ENCODE measurements at regions of chr11 and their contacts with region 1.

Region 1: DNA sequence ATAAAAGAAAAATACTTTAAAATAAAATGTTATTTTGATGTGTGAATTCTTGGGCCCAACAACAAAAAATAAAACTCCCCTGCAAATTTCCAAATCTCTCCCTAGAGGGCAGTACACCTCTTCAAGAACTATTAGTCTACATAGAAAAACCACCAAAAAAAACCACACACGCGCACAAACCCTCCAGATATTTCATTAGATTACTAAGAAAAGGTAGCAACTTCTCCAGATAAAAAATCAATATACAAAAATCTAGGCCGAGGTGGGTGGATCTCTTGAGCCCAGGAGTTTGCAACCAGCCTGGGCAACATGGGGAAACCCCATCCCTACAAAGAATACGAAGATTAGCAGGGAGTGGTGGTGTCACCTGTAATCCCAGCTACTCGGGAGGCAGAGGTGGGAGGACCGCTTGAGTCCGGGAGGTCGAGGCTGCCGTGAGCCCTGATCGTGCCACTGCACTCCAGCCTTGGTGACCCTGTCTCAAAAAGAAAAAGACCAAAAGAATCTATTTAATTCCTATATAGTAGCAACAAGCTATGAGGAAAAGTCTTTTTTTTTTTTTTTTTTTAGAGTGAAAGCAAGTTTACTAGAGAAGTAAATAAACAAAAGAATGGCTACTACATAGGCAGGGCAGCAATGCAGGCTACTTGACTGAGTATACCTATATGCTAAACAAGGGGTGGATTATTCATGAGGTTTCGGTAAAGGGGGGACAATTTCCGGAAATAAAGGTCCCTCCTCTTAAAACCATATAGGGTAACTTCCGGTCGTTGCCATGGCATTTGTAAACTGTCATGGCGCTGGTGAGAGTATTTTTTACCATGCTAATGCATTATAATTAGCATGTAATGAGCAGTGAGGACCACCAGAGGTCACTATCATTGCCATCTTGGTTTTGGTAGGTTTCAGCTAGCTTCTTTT is 13.1 kb downstream of the B3GNT6 start:
- DNase-seq: peak; percentile 93
- H3K4me3 Mint-ChIP-seq: peak overlapping the region; percentile 68
- H3K27ac Mint-ChIP-seq: no peak overlapping the region
- H3K4me1 Mint-ChIP-seq: peaks cover 12% of the 10 kb centered on the region
- H3K27me3 Mint-ChIP-seq: no peaks in the 10 kb centered on the region
- CTCF ChIP-seq: peak; percentile 63

Region 2: DNA sequence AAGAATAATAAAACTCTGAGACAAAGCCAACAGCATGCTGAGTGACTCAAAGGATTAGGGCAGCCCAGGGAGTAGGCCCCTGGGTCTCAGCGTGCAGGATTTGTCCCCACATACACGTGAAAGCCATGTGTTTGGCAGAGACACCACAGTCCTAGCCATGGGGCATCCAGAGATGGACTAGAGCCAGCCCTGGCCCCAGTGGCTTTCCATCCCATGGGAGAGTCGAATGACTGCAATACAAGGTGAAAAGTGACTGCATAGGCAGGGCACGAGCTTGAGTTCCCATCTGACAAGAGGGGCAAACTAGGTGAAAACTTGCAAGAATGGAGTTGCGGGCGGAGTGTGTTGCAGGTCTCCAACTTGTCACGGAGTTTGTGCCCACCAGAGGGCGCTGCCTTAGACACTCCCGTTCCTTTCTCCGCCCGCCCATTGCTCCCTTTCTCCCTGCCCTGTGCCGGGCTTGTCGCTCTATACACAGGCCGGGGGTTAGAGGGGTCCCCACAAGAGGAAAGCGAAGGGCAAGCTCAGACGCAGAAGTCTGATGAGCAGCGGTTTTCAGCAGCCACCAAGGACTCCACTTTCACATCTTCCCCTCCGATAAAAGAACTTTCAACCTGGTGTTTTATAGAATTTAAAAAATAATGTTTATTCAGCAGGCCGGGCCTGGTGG is 239.9 kb before region 1 on chr11:
- CTCF ChIA-PET with region 1: interaction called, 5 read pairs
- POLR2A ChIA-PET with region 1: no interaction called
- intact Hi-C with region 1: loop called (anchors 2 kb)
- DNase-seq: peak; percentile 87
- H3K4me3 Mint-ChIP-seq: no peak overlapping the region
- H3K27ac Mint-ChIP-seq: no peak overlapping the region
- H3K4me1 Mint-ChIP-seq: peaks cover 37% of the 10 kb centered on the region
- H3K27me3 Mint-ChIP-seq: no peaks in the 10 kb centered on the region
- CTCF ChIP-seq: peak; percentile 84

Region 3: DNA sequence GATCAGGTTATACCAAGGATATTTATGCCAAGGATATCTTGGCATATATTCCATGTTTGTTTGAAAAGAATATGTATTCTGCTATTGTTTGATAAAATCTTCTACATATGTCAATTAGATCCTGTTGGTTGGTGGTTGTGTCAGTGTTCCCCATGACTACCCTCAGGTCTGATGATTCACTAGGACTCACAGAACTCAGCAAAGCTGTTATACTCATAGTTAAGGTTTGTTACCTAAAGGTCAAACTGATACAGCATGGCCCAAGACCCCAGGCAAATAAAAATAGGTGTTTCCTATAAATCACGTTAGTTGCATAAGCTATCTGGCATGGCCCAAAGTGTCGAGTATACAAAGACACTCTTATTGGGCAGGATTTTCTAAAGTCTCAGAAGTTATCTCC is 43.3 kb before region 1 on chr11:
- CTCF ChIA-PET with region 1: no interaction called
- POLR2A ChIA-PET with region 1: no interaction called
- intact Hi-C with region 1: no loop called
- DNase-seq: peak; percentile 31
- H3K4me3 Mint-ChIP-seq: no peak overlapping the region
- H3K27ac Mint-ChIP-seq: no peak overlapping the region
- H3K4me1 Mint-ChIP-seq: no peaks in the 10 kb centered on the region
- H3K27me3 Mint-ChIP-seq: no peaks in the 10 kb centered on the region
- CTCF ChIP-seq: no peak

Region 4: GRCh38 chr11:77066229-77067042 is 19.2 kb after region 1 on chr11 and contains the start of gene CAPN5:
- CTCF ChIA-PET with region 1: interaction called, 37 read pairs
- POLR2A ChIA-PET with region 1: no interaction called
- intact Hi-C with region 1: no loop called
- DNase-seq: peak; percentile 82
- H3K4me3 Mint-ChIP-seq: peak within 1 kb of the TSS; percentile 68
- H3K27ac Mint-ChIP-seq: no peak within 1 kb of the TSS
- H3K4me1 Mint-ChIP-seq: no peaks in the 10 kb centered on the region
- H3K27me3 Mint-ChIP-seq: no peaks in the 10 kb centered on the region
- CTCF ChIP-seq: no peak
- total RNA-seq, gene CAPN5: 0.26 and 0.49 TPM in 2 replicates

Region 5: DNA sequence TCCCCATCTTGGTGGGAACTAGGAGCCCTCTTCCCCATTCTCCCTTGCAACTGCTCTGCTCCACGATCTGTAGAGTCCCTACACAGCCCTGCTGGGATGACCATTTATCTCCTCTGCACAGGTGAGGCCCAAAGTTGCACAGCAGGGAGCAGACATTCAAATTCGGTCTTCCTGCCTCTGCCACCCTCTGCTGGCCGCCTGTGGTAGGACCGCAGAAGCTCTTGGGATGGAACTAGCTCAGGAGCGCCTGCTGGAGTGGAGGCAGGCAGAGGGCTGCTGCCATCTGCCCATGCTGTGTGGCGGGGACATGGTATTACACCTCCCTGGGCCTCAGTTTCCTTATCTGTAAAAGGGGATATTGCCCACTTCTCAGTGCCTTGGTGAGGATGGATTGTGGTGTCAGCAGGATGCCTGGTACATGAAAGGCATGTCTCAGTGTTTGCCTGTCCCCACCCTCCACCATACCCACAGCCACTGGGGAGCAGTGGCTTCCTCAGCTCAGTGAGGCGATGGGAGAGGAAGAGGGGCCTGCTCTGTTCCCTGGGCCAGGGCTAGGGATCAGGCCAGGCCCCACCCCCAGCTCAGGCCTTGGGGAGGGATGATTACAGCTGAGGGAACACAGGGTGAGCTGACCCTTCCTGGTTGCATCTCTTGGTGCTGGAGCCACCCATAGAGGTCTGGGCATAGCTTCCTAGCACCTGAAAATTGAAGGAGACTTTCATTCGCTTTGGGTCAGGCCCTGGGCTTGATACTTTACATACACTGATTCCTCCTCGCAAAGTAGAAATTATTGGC is 44.1 kb after region 1 on chr11:
- CTCF ChIA-PET with region 1: interaction called, 74 read pairs
- POLR2A ChIA-PET with region 1: interaction called, 3 read pairs
- intact Hi-C with region 1: loop called (anchors 1 kb)
- DNase-seq: peak; percentile 77
- H3K4me3 Mint-ChIP-seq: no peak overlapping the region
- H3K27ac Mint-ChIP-seq: no peak overlapping the region
- H3K4me1 Mint-ChIP-seq: no peaks in the 10 kb centered on the region
- H3K27me3 Mint-ChIP-seq: no peaks in the 10 kb centered on the region
- CTCF ChIP-seq: peak; percentile 81

Region 6: GRCh38 chr11:77113382-77114088 is 66.3 kb after region 1 on chr11:
- CTCF ChIA-PET with region 1: interaction called, 11 read pairs
- POLR2A ChIA-PET with region 1: no interaction called
- intact Hi-C with region 1: loop called (anchors 1 kb)
- DNase-seq: peak; percentile 60
- H3K4me3 Mint-ChIP-seq: no peak overlapping the region
- H3K27ac Mint-ChIP-seq: no peak overlapping the region
- H3K4me1 Mint-ChIP-seq: no peaks in the 10 kb centered on the region
- H3K27me3 Mint-ChIP-seq: no peaks in the 10 kb centered on the region
- CTCF ChIP-seq: peak; percentile 47

Region 7: GRCh38 chr11:77287615-77288273 is 240.5 kb after region 1 on chr11:
- CTCF ChIA-PET with region 1: no interaction called
- POLR2A ChIA-PET with region 1: no interaction called
- intact Hi-C with region 1: no loop called
- DNase-seq: peak; percentile 79
- H3K4me3 Mint-ChIP-seq: no peak overlapping the region
- H3K27ac Mint-ChIP-seq: no peak overlapping the region
- H3K4me1 Mint-ChIP-seq: peaks cover 15% of the 10 kb centered on the region
- H3K27me3 Mint-ChIP-seq: no peaks in the 10 kb centered on the region
- CTCF ChIP-seq: no peak

Measured in MCF 10A (cell line).